ENCODE measurements at regions of chr19 and their contacts with region 1.

Region 1: GRCh38 chr19:32345261-32346207 is at the start of gene ZNF507:
- DNase-seq: peak; percentile 82 to 87
- ATAC-seq: peak; percentile 85 to 92 (median 92)
- H3K4me3 ChIP-seq: peak within 1 kb of the TSS; percentile 67
- H3K4me3 Mint-ChIP-seq: peak within 1 kb of the TSS; percentile 98
- H3K27ac ChIP-seq: peak within 1 kb of the TSS; percentile 76
- H3K27ac Mint-ChIP-seq: peak within 1 kb of the TSS; percentile 92 to 97
- H3K4me1 ChIP-seq: peaks cover 7% of the 10 kb centered on the region
- H3K4me1 Mint-ChIP-seq: peaks cover 39 to 40% of the 10 kb centered on the region in 2 donors
- H3K27me3 ChIP-seq: no peaks in the 10 kb centered on the region
- H3K27me3 Mint-ChIP-seq: no peaks in the 10 kb centered on the region
- CTCF ChIP-seq: no peak
- total RNA-seq, gene ZNF507: 27.9 to 34.6 (median 29.1) TPM

Region 2: DNA sequence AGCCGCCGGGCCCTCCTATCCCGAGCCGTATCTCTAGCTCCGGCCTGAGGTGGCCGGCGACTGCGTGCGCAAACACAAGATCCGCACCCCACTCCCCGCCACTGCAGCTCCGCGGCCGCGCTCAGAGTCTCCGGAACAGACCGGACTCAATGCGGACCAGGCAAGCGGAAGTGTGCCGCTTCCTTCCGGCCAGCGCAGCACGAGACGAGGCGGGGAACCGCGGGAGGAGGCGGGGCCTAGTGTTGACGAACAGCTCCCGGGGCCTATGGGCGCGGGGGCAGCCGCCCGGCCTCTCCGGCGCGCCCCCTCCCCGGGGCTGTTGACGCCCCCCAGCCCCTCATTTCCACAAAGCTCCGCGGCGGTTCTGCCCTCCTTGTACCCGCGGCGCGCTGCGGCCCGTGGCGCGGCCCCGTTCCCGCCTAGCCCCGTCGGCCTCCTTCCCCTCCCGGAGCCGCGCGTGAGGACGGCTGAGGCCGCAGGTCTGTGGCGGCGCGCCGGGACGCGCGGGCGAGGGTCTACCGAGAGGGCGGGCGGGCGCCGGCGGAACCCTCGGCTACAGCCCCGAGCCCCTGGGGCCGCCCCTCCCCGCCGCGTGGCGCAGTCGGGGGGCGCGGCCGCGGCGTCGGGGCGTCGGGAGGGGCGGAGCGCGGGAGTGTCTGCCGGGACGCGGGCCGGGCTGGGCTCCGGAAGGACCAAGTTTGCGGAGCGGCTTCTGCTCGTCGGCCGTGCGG is 60.1 kb after region 1 on chr19 and contains the start of gene DPY19L3:
- intact Hi-C with region 1: loop called (anchors 2 kb)
- DNase-seq: peak; percentile 92 to 94
- ATAC-seq: peak; percentile 92 to 97 (median 93)
- H3K4me3 ChIP-seq: peak within 1 kb of the TSS; percentile 73
- H3K4me3 Mint-ChIP-seq: peak within 1 kb of the TSS; percentile 87
- H3K27ac ChIP-seq: peak within 1 kb of the TSS; percentile 84
- H3K27ac Mint-ChIP-seq: peak within 1 kb of the TSS; percentile 80 to 87
- H3K4me1 ChIP-seq: peaks cover 17% of the 10 kb centered on the region
- H3K4me1 Mint-ChIP-seq: peaks cover 13 to 18% of the 10 kb centered on the region in 2 donors
- H3K27me3 ChIP-seq: no peaks in the 10 kb centered on the region
- H3K27me3 Mint-ChIP-seq: no peaks in the 10 kb centered on the region
- CTCF ChIP-seq: no peak
- total RNA-seq, gene DPY19L3: 26.7 to 28.1 (median 27.6) TPM

Region 3: DNA sequence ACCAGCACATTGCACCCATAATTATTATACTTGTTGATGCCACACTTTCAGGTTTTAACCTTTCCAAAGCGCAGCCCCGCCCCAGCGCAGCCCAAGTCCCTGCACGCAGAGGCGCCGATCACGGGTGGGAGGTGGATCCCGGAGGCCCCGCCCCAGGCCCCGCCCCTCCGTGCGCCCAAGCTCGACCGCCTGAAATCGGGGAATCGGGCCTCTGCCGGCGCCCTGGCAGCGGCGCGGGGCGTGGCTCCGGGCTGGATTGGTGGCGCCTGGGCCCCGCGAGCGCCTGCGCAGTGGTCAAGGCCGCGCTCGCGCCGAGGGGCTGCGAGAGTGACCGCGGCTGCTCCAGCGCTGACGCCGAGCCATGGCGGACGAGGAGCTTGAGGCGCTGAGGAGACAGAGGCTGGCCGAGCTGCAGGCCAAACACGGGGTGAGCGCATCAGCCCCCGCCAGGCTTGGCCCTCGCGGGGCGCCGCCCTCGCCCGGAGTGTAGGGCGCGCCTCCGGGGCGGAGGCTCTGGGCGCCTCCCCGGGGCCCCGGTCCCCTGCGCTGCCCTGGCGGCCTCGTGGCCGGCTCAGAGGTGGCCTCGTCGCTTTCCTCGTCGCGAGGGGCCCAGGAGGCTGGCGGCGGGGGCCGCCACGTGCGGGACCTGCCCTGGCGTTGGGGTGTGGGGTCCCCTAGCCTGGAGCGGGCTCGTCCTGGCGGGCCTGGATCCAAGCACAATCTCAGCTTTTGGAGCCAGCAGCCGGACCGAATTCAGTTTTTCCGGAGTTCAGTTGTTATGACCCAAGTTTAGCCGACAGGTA is 235.6 kb after region 1 on chr19 and contains the start of gene PDCD5:
- intact Hi-C with region 1: loop called (anchors 2 kb)
- DNase-seq: peak; percentile 91 to 96
- ATAC-seq: peak; percentile 95 to 98 (median 95)
- H3K4me3 ChIP-seq: peak within 1 kb of the TSS; percentile 68
- H3K4me3 Mint-ChIP-seq: peak within 1 kb of the TSS; percentile 98
- H3K27ac ChIP-seq: peak within 1 kb of the TSS; percentile 49
- H3K27ac Mint-ChIP-seq: peak within 1 kb of the TSS; percentile 80 to 81
- H3K4me1 ChIP-seq: peaks cover 20% of the 10 kb centered on the region
- H3K4me1 Mint-ChIP-seq: peaks cover 11 to 30% of the 10 kb centered on the region in 2 donors
- H3K27me3 ChIP-seq: no peaks in the 10 kb centered on the region
- H3K27me3 Mint-ChIP-seq: peaks cover 1 to 2% of the 10 kb centered on the region in 2 donors
- CTCF ChIP-seq: no peak
- total RNA-seq, gene PDCD5: 24.5 to 29.7 (median 25.0) TPM